ENCODE measurements at regions of chr14 and their contacts with region 1.

Region 1: GRCh38 chr14:49633640-49634546 is 1.2 kb downstream of the DNAAF2 start:
- DNase-seq: peak; percentile 95
- ATAC-seq: peak; percentile 94 to 96

Region 2: DNA sequence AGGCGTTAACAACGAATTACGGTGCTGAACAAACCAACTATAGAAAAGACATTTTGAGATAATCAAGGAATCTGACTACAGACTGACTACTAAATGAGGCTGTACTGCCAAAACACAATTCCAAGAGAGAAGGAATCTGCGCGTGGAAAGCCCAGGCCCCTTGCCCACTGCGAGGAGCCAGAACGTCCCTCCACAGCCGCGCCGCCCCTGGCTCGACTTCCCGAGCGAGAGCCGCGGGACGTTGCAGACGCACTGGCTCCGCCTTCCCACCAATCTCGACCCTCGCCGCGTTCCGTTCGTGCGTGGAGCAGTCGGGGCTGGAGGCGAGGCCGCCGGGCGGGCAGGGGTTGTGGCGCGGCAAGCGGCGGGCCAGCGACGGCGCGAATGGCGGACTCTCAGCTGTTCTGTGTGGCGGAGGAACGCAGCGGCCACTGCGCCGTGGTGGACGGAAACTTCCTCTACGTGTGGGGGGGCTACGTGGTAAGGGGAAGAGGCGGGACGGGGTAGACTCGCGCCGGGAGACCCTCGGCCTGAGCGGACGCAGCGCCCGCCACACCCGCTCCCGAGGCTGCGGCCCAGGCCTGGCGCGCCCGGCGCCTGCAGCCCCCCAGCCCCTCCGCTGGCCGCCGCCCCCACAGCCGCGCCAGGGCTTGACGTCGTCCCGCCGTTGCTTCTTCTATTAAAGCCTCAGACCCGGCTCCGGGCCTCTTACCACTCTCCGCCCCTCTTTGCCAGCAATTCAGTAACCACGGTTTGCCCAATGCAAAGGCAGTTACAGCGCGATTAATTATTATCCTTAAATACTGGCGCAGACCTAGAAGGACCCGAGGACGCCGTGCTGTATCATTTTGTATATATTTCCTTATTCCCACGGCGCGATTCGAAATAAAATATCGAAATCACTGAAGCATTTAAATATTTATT is 59.2 kb after region 1 on chr14 and contains the start of gene KLHDC1:
- intact Hi-C with region 1: loop called in 1 of 2 experiments (anchors 10 kb)
- DNase-seq: peak; percentile 93
- ATAC-seq: peak; percentile 95
- total RNA-seq, gene KLHDC1: 6.5 to 11.8 TPM

Region 3: DNA sequence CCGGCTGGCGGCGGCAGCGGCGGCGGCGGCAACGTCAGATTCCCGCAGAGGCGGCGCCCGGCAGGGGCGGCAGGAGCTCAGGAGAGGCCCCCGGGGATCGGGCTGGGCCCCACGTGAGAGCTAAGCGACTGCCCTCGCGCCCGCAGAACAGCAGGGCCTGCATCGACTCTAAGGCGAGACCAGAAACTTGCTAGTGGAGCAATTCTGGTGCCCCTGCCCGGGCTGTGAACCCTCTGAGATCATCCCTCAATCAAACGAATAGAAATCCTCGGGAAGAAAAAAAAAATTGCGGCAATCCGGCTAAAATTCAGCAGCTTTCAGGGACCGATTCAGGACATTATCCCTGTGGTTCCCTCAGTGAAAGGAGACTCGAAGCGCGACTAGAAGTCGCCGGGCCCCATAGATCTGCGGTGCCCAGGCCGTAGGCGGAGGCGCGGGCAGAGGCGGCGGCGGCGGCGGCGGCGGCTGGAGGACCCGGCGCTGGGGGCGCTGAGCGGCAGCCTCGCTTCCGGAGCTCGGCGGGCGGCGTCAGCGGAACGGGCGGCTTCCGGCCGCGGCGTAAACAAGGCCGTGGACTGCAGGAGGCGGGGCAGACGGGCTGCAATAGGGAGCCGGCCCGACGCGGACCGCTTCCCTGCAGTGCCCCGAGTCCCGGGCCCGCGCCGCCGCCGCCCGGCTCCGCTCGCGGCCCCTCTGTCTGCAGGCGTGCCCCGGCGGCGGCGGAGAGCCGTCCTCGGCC is 133.8 kb after region 1 on chr14 and contains the start of gene KLHDC2:
- intact Hi-C with region 1: loop called in 1 of 2 experiments (anchors 5 kb)
- DNase-seq: peak; percentile 92
- ATAC-seq: peak; percentile 95 to 97
- total RNA-seq, gene KLHDC2: 54.8 to 67.1 TPM

Measured in left cardiac atrium (tissue), 4 donors.